ENCODE measurements at regions of chr12 and their contacts with region 1.

Region 1: DNA sequence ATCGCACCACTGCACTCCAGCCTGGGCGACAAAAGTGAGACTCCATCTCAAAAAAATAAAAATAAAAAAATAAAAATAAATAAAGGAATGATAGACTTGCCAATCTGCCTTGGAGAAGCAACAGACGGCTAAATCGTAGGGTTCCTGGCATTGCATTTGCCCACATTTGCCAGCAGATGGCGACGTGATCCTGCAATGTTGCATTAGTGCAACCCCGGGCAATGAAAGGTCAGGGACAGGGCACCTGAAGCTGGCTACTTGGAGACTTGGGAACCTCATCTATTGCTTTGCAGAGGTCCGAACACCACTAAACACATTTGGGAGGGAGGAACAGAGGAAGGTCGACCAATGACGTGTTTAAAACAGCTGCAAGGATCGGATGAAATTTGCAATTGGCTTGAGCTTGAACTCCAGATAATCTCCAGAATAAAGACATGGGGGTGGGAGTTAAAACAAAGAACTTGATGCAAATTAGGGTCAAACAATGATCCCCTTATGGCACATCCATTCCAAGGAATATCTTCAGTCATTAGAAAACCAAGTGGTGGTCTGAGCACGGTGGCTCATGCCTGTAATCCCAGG is 34.6 kb downstream of the SPRING1 start:
- DNase-seq: peak in 4 of 5 donors; percentile 51 to 57 (median 53)
- H3K4me3 ChIP-seq: no peak overlapping the region
- H3K4me3 Mint-ChIP-seq: no peak overlapping the region
- H3K27ac ChIP-seq: no peak overlapping the region
- H3K27ac Mint-ChIP-seq: peak overlapping the region in 1 of 7 donors; percentile 83
- H3K4me1 ChIP-seq: peaks cover 3% of the 10 kb centered on the region
- H3K4me1 Mint-ChIP-seq: peaks cover 0 to 5% (median 3%) of the 10 kb centered on the region in 4 donors
- H3K27me3 ChIP-seq: no peaks in the 10 kb centered on the region
- H3K27me3 Mint-ChIP-seq: peaks cover 2 to 5% of the 10 kb centered on the region in 2 donors

Region 2: GRCh38 chr12:116838365-116838764 is 135.1 kb after region 1 on chr12:
- CTCF ChIA-PET with region 1: no interaction called
- POLR2A ChIA-PET with region 1: no interaction called
- intact Hi-C with region 1: no loop called
- DNase-seq: no peak
- H3K4me3 ChIP-seq: no peak overlapping the region
- H3K4me3 Mint-ChIP-seq: no peak overlapping the region
- H3K27ac ChIP-seq: no peak overlapping the region
- H3K27ac Mint-ChIP-seq: no peak overlapping the region
- H3K4me1 ChIP-seq: no peaks in the 10 kb centered on the region
- H3K4me1 Mint-ChIP-seq: no peaks in the 10 kb centered on the region
- H3K27me3 ChIP-seq: no peaks in the 10 kb centered on the region
- H3K27me3 Mint-ChIP-seq: no peaks in the 10 kb centered on the region

Region 3: GRCh38 chr12:116882742-116883141 is 179.4 kb after region 1 on chr12:
- CTCF ChIA-PET with region 1: no interaction called
- POLR2A ChIA-PET with region 1: no interaction called
- intact Hi-C with region 1: loop called (anchors 1 kb)
- DNase-seq: no peak
- H3K4me3 ChIP-seq: no peak overlapping the region
- H3K4me3 Mint-ChIP-seq: peak overlapping the region in 6 of 8 donors; percentile 11 to 78 (median 59)
- H3K27ac ChIP-seq: no peak overlapping the region
- H3K27ac Mint-ChIP-seq: no peak overlapping the region
- H3K4me1 ChIP-seq: peaks cover 27% of the 10 kb centered on the region
- H3K4me1 Mint-ChIP-seq: peaks cover 26 to 40% (median 32%) of the 10 kb centered on the region in 4 donors
- H3K27me3 ChIP-seq: peaks cover 14% of the 10 kb centered on the region
- H3K27me3 Mint-ChIP-seq: peaks cover 47 to 55% of the 10 kb centered on the region in 2 donors

Region 4: GRCh38 chr12:117025481-117026151 is 322.3 kb after region 1 on chr12:
- CTCF ChIA-PET with region 1: interaction called, 9 read pairs
- POLR2A ChIA-PET with region 1: no interaction called
- intact Hi-C with region 1: loop called (anchors 10 kb)
- DNase-seq: peak; percentile 39 to 52 (median 40)
- H3K4me3 ChIP-seq: no peak overlapping the region
- H3K4me3 Mint-ChIP-seq: peak overlapping the region in 1 of 8 donors; percentile 23
- H3K27ac ChIP-seq: no peak overlapping the region
- H3K27ac Mint-ChIP-seq: peak overlapping the region in 5 of 7 donors; percentile 25 to 82 (median 59)
- H3K4me1 ChIP-seq: peaks cover 6% of the 10 kb centered on the region
- H3K4me1 Mint-ChIP-seq: peaks cover 0 to 10% (median 5%) of the 10 kb centered on the region in 4 donors
- H3K27me3 ChIP-seq: no peaks in the 10 kb centered on the region
- H3K27me3 Mint-ChIP-seq: no peaks in the 10 kb centered on the region

Region 5: DNA sequence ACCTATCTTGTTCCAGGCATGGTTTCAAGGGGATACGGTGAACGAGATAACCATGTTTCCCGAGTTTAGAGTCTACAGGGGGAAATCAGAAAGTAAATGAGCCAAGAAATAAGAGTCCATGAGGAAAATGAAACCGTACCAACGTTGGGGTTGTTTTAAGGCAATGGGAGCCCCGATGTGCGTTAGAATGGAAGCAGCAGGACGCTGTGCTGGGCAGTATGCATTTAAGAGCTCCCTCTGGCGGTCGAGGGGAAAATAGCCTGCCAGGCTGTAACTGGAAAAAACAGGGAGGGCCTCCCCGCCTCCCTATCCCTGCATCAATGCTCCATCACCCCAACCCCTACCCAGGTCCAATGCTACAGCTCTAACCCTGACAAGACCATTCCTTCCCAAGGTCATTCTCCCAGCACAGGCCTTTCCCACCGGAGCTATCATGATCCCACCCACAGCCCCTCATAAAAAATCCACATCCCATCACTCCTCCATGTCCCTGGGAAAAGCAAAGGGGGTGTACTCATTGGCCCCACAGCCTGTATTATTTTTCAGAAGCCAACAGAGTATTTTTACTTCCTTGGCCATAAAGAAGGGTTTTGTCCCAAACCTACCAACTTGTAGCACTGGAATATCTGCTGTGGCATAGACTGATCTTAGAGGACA is 884.5 kb after region 1 on chr12:
- CTCF ChIA-PET with region 1: no interaction called
- POLR2A ChIA-PET with region 1: no interaction called
- intact Hi-C with region 1: loop called (anchors 10 kb)
- DNase-seq: peak in 4 of 5 donors; percentile 0 to 10 (median 2)
- H3K4me3 ChIP-seq: no peak overlapping the region
- H3K4me3 Mint-ChIP-seq: no peak overlapping the region
- H3K27ac ChIP-seq: no peak overlapping the region
- H3K27ac Mint-ChIP-seq: no peak overlapping the region
- H3K4me1 ChIP-seq: no peaks in the 10 kb centered on the region
- H3K4me1 Mint-ChIP-seq: peaks cover 0 to 3% (median under 1%) of the 10 kb centered on the region in 4 donors
- H3K27me3 ChIP-seq: no peaks in the 10 kb centered on the region
- H3K27me3 Mint-ChIP-seq: peaks cover 0 to 4% of the 10 kb centered on the region in 2 donors

Measured in CD4-positive, alpha-beta memory T cell (primary cell).